ENCODE measurements at regions of chr10 and their contacts with region 1.

Region 1: DNA sequence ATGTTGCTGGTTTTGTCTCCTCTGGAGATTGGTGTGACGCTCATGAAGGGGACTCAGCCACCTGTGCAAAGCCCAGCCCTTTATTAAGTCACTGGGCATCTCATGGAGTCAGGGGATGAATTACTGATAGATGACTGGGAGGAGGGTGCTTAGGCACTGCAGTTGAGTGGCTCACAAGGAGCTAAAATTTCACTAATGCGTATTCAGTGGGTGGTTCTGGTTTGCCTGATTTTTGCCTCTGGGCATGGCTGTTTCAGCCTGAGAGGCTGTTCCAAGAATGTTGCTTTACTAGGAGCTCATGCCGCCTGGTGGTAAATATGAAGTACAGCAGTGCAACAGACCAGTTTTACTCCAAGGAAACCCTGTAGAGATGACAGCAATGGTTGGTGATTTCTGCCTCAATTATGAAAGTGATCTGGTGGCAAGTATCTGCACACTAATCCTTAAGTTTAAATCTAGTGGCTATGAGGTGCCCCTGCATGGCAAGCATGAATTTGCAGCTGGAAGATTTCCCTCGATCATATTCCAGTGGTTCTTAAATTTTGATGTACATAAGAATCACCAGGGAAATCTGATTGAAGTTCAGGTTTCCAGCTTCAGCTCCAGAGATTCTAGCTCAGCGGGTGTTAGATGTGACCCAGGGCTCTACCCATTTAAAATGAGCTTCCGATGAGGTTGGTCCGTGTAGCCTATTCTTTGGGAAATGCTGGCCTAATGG is 19.9 kb downstream of the ACTA2 start:
- DNase-seq: no peak

Region 2: GRCh38 chr10:88835096-88835909 is 97.4 kb before region 1 on chr10:
- intact Hi-C with region 1: loop called (anchors 1 kb)
- DNase-seq: peak; percentile 90

Region 3: GRCh38 chr10:88986549-88987242 is 54.0 kb after region 1 on chr10:
- intact Hi-C with region 1: loop called (anchors 2 kb)
- DNase-seq: no peak

Region 4: DNA sequence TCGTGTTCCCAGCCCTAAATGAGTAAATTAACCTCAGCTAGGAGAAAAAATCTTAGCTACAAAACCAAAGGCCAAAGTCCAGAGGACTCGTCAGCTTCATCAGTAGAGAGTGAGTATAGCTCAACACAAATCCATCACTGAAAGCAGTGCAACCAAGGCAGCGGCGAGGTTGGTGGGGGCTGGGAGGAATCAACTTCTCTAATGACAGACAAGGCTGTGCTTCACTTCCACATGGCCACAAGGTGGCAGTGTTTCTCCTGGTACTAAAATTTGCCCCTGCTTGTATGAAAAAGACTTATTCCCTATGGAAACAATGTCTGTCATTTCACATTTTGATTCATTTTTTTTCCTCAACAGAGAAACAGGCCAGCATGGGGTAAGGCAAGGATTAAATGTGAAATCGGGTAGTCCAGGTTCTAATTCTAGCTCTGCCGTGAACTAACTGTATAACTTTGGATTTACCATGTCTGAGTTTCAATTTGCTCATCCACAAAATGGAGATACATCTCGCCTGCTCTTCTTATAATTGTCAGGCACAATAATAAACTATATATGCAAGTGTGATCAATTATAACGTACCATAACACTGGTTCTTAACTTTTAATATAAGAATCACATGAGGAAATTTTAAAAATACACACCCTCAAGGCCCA is 97.2 kb after region 1 on chr10:
- intact Hi-C with region 1: loop called (anchors 5 kb)
- DNase-seq: peak; percentile 83

Region 5: GRCh38 chr10:89217057-89217990 is 284.6 kb after region 1 on chr10:
- intact Hi-C with region 1: loop called (anchors 2 kb)
- DNase-seq: no peak